Activated B cell treated with CpG ODN at 0.5 μM for 24 hours (primary cell): ENCODE measurements at regions of chr6 and their contacts with region 1.

Region 1: GRCh38 chr6:150004783-150005717 is 20.3 kb downstream of the RAET1L start:
- DNase-seq: peak; percentile 82
- ATAC-seq: peak; percentile 79
- H3K4me3 Mint-ChIP-seq: peak overlapping the region; percentile 92
- H3K27ac Mint-ChIP-seq: peak overlapping the region; percentile 95
- H3K4me1 Mint-ChIP-seq: peaks cover 34% of the 10 kb centered on the region
- H3K27me3 Mint-ChIP-seq: peaks cover 12% of the 10 kb centered on the region
- CTCF ChIP-seq: no peak

Region 2: DNA sequence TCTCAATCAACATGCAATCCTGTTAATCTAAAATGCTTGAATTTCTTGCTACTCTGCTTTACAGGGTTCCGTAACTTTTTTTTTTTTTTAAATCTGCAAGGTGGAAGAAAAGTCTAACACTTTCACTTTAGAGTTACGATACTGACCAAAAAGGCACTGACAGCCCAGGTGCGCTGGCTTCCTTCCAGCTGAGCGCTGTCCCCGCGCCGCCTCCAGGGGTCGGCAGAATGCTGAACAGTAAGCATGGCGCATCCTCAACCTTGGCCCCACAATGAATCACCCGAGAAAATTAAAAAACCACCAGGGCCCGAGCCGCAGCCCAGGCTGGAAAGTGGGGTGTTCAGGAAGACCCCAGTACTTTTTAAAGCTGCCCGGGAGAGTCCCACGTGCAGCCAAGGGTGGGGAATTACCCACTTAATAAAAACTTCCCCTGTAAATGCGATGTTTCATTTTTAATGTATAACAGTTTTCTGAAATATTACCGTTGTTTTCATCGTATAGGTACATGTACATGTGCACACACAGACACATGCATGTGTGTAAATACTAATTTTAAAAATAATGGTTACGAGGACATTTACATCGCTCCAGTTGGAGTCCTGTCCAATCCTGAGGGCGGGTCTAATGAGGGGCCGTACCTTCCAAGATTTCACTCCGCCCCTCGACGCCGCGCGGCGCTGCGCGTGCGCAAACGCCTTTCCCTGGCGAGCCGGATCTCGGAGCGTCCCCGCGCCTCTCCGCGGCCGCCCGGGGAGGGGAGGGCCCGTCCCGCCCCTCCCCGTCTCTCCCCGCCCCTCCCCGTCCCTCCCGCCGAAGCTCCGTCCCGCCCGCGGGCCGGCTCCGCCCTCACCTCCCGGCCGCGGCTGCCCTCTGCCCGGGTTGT is 439.3 kb before region 1 on chr6 and contains the start of gene GINM1:
- CTCF ChIA-PET with region 1: no interaction called
- POLR2A ChIA-PET with region 1: no interaction called
- intact Hi-C with region 1: loop called (anchors 5 kb)
- DNase-seq: peak; percentile 97
- ATAC-seq: peak; percentile 85
- H3K4me3 Mint-ChIP-seq: peak within 1 kb of the TSS; percentile 93
- H3K27ac Mint-ChIP-seq: peak within 1 kb of the TSS; percentile 92
- H3K4me1 Mint-ChIP-seq: peaks cover 22% of the 10 kb centered on the region
- H3K27me3 Mint-ChIP-seq: no peaks in the 10 kb centered on the region
- CTCF ChIP-seq: no peak
- total RNA-seq, gene GINM1: 15.4 and 18.0 TPM in 2 replicates

Region 3: GRCh38 chr6:149717588-149718458 is 287.2 kb before region 1 on chr6 and contains the start of gene LATS1:
- CTCF ChIA-PET with region 1: no interaction called
- POLR2A ChIA-PET with region 1: interaction called, 3 read pairs
- intact Hi-C with region 1: loop called (anchors 5 kb)
- DNase-seq: peak; percentile 90
- ATAC-seq: peak; percentile 90
- H3K4me3 Mint-ChIP-seq: peak within 1 kb of the TSS; percentile 95
- H3K27ac Mint-ChIP-seq: peak within 1 kb of the TSS; percentile 96
- H3K4me1 Mint-ChIP-seq: peaks cover 29% of the 10 kb centered on the region
- H3K27me3 Mint-ChIP-seq: no peaks in the 10 kb centered on the region
- CTCF ChIP-seq: no peak
- total RNA-seq, gene LATS1: 34.6 and 42.0 TPM in 2 replicates

Region 4: GRCh38 chr6:149830731-149831307 is 174.2 kb before region 1 on chr6:
- CTCF ChIA-PET with region 1: no interaction called
- POLR2A ChIA-PET with region 1: no interaction called
- intact Hi-C with region 1: no loop called
- DNase-seq: no peak
- ATAC-seq: no peak
- H3K4me3 Mint-ChIP-seq: no peak overlapping the region
- H3K27ac Mint-ChIP-seq: no peak overlapping the region
- H3K4me1 Mint-ChIP-seq: no peaks in the 10 kb centered on the region
- H3K27me3 Mint-ChIP-seq: peaks cover 4% of the 10 kb centered on the region
- CTCF ChIP-seq: no peak

Region 5: DNA sequence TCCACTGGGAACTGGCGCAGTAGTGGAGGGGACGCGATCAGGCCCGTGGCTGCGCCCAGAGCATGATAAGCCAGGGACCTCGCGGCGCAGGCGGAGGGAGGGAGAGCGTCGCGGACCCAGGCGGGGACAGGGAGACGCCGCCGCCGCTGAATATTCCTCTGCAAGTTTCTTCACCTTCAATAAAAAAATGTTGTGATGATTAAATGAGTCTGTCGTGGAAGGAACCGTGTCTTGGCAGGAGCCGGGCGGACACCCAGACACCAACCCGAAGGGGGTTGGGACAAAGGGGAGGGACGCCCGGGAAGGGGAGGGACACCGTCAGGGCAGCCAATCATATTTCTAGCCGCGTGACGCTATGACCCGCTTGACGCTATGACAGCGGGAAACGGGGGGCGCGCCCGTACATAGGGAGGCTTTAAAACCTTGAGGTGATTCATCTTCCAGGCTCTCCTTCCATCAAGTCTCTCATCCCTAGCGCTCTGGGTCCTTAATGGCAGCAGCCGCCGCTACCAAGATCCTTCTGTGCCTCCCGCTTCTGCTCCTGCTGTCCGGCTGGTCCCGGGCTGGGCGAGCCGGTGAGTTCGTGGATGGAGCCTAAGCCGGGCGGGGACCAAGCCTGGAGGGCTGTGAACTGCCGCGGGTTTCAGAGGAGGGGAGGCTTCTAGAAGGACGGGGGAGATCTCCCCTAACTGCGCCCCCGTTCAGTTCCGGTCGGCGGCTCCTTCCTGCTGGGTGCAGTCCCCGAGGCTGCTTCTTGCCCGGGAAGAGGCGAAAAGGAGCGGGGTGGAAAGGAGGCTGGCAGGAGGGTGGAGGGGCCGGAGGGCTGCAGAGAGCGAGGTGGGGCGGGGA is 63.2 kb before region 1 on chr6 and contains the start of gene ULBP2:
- CTCF ChIA-PET with region 1: interaction called, 4 read pairs
- POLR2A ChIA-PET with region 1: interaction called, 5 read pairs
- intact Hi-C with region 1: loop called (anchors 1 kb)
- DNase-seq: peak; percentile 53
- ATAC-seq: peak; percentile 70
- H3K4me3 Mint-ChIP-seq: peak within 1 kb of the TSS; percentile 89
- H3K27ac Mint-ChIP-seq: peak within 1 kb of the TSS; percentile 73
- H3K4me1 Mint-ChIP-seq: peaks cover 43% of the 10 kb centered on the region
- H3K27me3 Mint-ChIP-seq: peaks cover 46% of the 10 kb centered on the region
- CTCF ChIP-seq: no peak
- total RNA-seq, gene ULBP2: 0.29 and 0.37 TPM in 2 replicates

Region 6: GRCh38 chr6:149963462-149964307 is 41.4 kb before region 1 on chr6 and contains the start of gene ULBP1:
- CTCF ChIA-PET with region 1: no interaction called
- POLR2A ChIA-PET with region 1: interaction called, 8 read pairs
- intact Hi-C with region 1: loop called (anchors 1 kb)
- DNase-seq: peak; percentile 76
- ATAC-seq: peak; percentile 74
- H3K4me3 Mint-ChIP-seq: peak within 1 kb of the TSS; percentile 91
- H3K27ac Mint-ChIP-seq: peak within 1 kb of the TSS; percentile 81
- H3K4me1 Mint-ChIP-seq: peaks cover 27% of the 10 kb centered on the region
- H3K27me3 Mint-ChIP-seq: peaks cover 72% of the 10 kb centered on the region
- CTCF ChIP-seq: no peak
- total RNA-seq, gene ULBP1: 1.9 and 2.2 TPM in 2 replicates

Region 7: DNA sequence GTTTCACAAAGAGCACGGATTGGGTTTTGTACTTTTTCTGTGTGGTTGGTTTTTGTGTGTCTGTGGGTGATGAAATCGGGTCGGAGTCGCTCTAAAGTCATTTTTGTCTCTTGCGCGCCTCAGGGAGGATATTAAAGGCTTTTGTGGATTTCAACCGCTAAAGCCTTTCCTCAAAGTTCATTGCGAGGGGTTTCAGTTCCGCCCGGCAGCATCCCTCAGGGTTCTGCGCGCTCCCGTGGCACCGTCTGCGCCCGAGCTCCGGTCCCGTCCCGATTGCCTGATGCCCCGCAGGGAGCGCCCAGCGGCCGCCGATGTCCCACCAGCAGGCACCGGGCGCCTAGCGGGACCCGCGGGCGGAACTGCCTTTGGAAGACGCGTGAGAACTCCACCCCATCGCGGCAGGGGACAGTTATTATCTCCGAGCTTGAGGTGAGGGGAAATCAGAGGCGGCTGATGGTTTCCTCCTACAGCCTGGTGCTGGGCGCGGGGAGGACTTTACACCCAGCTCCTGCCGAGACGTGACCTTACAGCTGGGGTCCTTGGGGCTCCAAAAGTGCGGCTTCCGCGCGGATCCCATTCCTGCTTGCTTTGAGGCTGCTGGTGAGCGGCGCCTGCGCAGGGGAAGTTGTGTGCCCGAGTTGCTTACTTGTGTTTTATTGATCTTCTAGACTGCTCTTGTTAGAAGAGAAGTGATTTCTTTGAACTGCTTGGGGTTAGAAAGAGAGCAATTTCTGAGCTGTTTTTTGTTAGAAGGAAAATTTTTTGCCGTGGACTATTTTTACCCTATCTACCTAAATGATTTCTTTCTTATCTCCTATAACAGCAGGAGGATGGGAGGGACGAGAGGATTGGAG is 14.2 kb before region 1 on chr6:
- CTCF ChIA-PET with region 1: interaction called, 3 read pairs
- POLR2A ChIA-PET with region 1: interaction called, 5 read pairs
- intact Hi-C with region 1: loop called (anchors 1 kb)
- DNase-seq: peak; percentile 59
- ATAC-seq: peak; percentile 70
- H3K4me3 Mint-ChIP-seq: peak overlapping the region; percentile 75
- H3K27ac Mint-ChIP-seq: peak overlapping the region; percentile 5
- H3K4me1 Mint-ChIP-seq: peaks cover 26% of the 10 kb centered on the region
- H3K27me3 Mint-ChIP-seq: peaks cover 66% of the 10 kb centered on the region
- CTCF ChIP-seq: no peak

Region 8: DNA sequence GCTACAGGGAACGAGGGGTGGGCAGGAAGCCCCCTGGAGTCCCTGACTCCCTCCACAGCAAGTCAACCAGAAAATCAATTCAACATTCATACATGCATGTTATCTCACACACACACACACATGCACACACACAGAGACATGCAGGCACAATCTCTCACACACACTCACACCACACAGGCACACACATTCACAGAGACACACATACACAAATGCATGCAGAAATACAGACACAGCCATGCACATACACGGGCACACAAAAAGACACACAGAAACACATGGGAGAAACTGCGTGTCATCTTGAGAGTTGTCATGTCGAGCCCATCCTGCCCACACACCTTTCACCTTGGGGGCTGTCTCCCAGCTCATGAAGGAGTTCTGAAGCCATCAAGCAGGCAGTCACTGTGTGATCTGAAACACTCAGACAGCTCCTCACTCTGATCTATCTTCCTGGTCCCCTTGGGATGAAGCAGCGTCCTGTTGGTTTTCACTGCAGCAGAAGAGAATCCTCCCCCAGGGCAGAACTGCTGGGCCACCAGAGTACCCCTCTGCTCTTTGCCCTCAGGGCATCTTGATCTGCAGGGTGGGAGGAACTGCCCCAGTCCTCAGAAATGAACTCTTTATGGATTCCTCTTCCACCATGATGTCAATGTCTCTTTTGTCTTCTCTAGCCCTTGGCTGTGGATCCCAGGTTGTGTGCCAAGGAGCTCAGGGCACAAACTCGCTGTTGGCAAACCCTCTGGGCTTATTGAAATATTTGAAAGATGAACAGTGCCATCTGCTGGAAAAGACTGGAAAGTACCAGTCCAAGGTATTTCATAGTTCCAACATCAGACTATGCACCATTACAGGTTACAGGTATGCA is 11.5 kb after region 1 on chr6:
- CTCF ChIA-PET with region 1: interaction called, 5 read pairs
- POLR2A ChIA-PET with region 1: no interaction called
- intact Hi-C with region 1: loop called (anchors 1 kb)
- DNase-seq: peak; percentile 36
- ATAC-seq: peak; percentile 85
- H3K4me3 Mint-ChIP-seq: no peak overlapping the region
- H3K27ac Mint-ChIP-seq: no peak overlapping the region
- H3K4me1 Mint-ChIP-seq: peaks cover 16% of the 10 kb centered on the region
- H3K27me3 Mint-ChIP-seq: peaks cover 62% of the 10 kb centered on the region
- CTCF ChIP-seq: no peak

Region 9: DNA sequence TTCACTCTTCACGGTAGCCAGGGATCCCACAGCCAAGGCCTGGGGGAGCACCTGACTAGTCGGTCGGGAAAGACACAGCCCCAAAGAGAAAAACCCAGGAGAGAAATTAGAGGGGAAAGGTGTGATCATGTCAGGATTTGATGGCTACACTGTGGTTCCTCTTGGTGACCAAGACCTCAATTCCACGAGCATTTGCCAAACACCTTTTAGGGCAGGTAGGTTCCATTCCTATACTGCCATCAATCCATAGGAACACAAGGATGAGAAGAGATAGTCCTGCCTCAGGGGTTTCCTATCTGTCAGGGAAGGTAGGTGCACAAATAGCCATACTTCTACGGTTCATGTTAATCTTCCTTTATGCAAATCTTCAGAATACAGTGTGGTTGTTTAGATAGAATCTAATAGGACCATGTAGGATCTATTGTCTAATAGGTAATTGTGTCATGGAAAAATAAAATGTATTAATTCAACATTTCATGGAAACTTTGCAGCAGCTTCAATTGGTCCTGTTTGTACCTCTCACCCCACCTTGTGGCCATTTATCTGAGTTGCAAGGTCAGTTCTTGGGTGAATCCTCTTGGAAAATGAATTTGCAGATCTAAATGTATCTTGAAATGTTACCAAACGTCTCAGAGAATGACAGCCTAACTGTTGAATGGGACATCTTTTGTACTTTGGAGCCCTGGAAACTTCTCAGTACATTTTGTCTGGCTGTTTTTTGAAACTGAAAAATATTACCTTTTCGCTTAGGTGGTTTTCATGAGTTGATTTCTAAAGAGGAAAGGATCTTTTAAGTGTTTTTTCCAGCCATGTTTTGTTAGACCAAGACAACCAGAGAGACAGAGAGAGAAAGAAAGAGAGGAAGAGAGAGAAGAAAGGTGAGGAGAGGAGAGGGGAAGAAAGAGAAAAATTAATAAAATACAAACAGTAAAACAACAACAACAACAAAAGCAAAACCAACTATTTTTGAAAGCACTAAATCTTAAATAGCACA is 330.0 kb after region 1 on chr6:
- CTCF ChIA-PET with region 1: no interaction called
- POLR2A ChIA-PET with region 1: no interaction called
- intact Hi-C with region 1: no loop called
- DNase-seq: no peak
- ATAC-seq: peak; percentile 45
- H3K4me3 Mint-ChIP-seq: no peak overlapping the region
- H3K27ac Mint-ChIP-seq: no peak overlapping the region
- H3K4me1 Mint-ChIP-seq: no peaks in the 10 kb centered on the region
- H3K27me3 Mint-ChIP-seq: peaks cover 11% of the 10 kb centered on the region
- CTCF ChIP-seq: peak; percentile 68

Region 10: GRCh38 chr6:150830439-150831165 is 825.6 kb after region 1 on chr6:
- CTCF ChIA-PET with region 1: no interaction called
- POLR2A ChIA-PET with region 1: no interaction called
- intact Hi-C with region 1: no loop called
- DNase-seq: no peak
- ATAC-seq: no peak
- H3K4me3 Mint-ChIP-seq: no peak overlapping the region
- H3K27ac Mint-ChIP-seq: no peak overlapping the region
- H3K4me1 Mint-ChIP-seq: peaks cover 5% of the 10 kb centered on the region
- H3K27me3 Mint-ChIP-seq: no peaks in the 10 kb centered on the region
- CTCF ChIP-seq: no peak